ENCODE measurements at regions of chr7 and their contacts with region 1.

Region 1: DNA sequence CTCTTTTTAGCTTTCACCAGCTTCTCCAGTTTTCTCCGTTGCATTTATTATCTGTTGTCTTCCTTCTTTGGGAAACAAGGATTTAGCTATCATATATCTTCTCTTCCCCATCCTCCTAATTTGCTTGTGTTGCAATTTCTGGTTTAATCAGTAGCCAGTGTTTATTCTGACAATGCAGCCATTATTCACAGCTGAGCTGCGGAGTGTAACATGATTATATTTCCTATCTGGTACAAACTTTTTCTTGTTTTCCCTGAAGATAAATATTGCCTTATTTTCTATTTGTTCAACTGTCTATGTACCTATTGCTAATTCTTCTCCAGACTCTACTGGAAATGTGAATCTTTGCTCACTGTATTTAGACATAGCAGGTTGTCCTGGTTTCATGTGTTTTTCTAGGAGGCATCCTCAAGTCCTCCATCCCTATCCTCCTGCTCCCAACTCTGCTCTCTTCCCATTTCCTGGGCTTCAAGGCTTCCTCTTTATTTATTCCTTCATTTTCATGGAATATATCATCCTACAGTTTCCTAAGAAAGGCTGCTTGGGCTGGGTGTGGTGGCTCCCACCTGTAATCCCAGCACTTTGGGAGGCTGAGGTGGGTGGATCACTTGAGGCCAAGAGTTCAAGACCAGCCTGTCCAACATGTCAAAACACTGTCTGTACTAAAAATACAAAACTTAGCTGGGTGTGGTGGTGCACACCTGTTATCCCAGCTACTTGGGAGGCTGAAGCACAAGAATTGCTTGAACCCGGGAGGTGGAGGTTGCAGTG is 72.4 kb upstream of the KDM7A start:
- H3K4me3 Mint-ChIP-seq: no peak overlapping the region
- H3K27ac Mint-ChIP-seq: peak overlapping the region; percentile 95
- H3K4me1 Mint-ChIP-seq: peaks cover 64% of the 10 kb centered on the region
- H3K27me3 Mint-ChIP-seq: no peaks in the 10 kb centered on the region

Region 2: DNA sequence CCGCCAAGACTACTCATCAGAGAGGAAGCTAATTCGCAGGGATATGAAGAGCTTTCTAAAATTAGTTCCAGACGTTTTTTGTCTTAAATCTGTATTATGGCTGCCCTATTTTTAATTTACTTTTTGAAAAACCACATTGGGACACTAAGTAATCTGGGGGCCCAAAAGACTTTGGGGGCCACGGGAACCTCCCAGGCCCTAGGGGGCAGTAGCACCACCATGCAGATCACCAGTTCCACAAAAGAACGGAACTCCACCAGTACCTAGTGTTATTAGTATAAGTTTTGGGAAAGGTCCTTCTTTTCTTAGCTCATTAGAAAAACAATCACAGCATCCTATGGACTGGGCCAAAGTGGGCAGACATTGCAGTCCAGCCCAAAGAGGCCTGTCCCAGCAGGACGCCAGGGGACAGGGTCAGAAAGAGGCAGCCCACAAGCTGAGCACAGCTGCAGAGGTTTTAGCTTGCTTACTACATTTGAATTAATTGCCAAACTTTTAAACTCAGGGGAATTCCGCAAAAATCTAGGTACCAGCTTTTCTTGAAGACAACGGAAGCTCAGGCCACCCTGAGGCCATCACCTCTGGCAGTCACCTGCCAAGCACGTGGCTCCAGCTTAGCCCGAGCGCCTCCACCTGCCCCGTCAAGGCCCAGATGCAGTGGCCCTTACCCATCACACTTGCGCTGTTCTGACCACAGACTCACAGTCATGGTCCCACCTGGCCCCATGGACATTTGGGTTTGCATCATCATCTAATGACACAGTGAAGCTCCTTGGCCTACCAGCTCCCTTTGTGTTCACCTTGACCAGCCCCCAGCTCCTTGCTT is 261.3 kb before region 1 on chr7:
- intact Hi-C with region 1: no loop called
- H3K4me3 Mint-ChIP-seq: no peak overlapping the region
- H3K27ac Mint-ChIP-seq: no peak overlapping the region
- H3K4me1 Mint-ChIP-seq: peaks cover 41% of the 10 kb centered on the region
- H3K27me3 Mint-ChIP-seq: no peaks in the 10 kb centered on the region

Region 3: DNA sequence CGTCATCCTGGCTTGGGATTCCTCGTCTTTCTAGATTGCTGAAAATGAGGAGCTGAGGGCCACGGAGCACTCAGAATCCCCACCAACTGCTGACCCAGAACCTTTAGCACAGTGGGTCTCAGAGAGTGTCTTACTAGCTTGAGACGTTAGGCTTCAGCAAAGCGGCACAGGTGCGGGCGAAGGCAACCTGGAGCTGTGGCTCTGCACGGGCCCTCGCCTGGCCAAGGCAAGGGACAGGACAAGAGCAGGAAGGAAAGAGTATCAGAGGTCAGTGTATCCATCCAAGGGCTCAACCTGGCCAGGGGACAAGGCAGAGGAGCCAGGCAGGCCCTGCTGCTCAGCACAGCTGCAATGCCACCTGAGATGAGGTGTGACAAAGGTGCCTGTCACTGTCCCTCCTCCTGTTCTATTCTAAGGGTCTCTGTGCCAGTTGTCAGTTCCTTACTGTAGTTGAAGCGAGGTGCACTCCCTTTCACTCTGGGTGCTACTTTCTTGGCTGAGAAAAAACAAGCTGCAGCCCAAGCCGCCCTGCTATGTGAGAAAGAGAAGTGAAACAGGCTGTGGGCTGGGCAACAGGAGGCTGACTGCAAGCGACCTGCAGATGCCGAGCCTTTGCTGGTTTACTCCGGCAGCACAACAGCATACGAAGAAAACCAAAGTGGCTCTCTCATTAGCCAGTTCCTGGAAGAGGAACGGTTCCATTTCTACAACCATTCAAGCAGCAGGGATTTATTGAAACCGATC is 39.2 kb before region 1 on chr7:
- intact Hi-C with region 1: no loop called
- H3K4me3 Mint-ChIP-seq: peak overlapping the region; percentile 62
- H3K27ac Mint-ChIP-seq: peak overlapping the region; percentile 99
- H3K4me1 Mint-ChIP-seq: peaks cover 84% of the 10 kb centered on the region
- H3K27me3 Mint-ChIP-seq: peaks cover 5% of the 10 kb centered on the region

Region 4: DNA sequence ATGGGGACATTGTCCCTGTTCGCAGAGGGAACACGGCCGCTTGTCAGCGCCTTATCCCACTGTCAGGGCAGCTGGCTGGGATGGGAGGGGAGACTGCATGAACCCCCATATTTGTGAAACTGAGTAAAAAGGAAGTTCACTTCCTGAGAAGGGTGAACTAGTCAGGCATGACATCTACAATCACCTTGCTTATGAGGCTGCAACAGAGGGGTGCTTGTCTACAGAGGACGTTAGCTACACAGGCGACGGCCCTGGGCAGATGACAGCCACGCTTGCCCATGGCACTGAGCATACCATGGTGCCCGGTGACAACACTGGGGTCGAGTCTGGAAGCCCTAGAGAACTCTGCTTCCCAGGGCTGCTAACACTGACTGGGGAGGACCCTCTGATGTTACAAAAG is 26.4 kb before region 1 on chr7:
- intact Hi-C with region 1: no loop called
- H3K4me3 Mint-ChIP-seq: no peak overlapping the region
- H3K27ac Mint-ChIP-seq: peak overlapping the region; percentile 70
- H3K4me1 Mint-ChIP-seq: peaks cover 30% of the 10 kb centered on the region
- H3K27me3 Mint-ChIP-seq: peaks cover 14% of the 10 kb centered on the region

Region 5: DNA sequence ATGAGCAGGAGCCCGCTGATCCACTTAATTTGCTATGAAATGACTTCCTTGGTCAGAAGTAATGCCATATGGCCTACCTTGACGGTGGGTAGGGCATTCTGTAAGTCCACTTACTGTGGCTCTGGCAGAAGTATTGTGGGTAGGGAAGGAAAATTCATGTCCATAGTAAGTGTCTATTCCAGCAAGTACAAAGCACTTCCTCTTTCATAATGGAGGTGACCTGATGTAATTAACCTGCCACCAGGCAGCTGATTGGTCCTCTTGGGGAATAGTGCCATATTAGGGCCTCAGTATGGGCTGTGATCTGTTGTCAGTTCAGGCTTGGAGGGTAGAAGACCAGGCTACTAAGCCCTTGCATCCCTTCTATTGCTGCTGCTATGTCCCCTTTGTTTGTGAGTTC is 45.2 kb after region 1 on chr7:
- intact Hi-C with region 1: loop called (anchors 5 kb)
- H3K4me3 Mint-ChIP-seq: no peak overlapping the region
- H3K27ac Mint-ChIP-seq: no peak overlapping the region
- H3K4me1 Mint-ChIP-seq: peaks cover 39% of the 10 kb centered on the region
- H3K27me3 Mint-ChIP-seq: no peaks in the 10 kb centered on the region

Region 6: GRCh38 chr7:140316165-140316661 is 67.0 kb after region 1 on chr7:
- intact Hi-C with region 1: loop called (anchors 2 kb)
- H3K4me3 Mint-ChIP-seq: peak overlapping the region; percentile 94
- H3K27ac Mint-ChIP-seq: peak overlapping the region; percentile 98
- H3K4me1 Mint-ChIP-seq: peaks cover 71% of the 10 kb centered on the region
- H3K27me3 Mint-ChIP-seq: no peaks in the 10 kb centered on the region

Region 7: GRCh38 chr7:141001122-141001521 is 751.9 kb after region 1 on chr7:
- intact Hi-C with region 1: no loop called
- H3K4me3 Mint-ChIP-seq: no peak overlapping the region
- H3K27ac Mint-ChIP-seq: no peak overlapping the region
- H3K4me1 Mint-ChIP-seq: no peaks in the 10 kb centered on the region
- H3K27me3 Mint-ChIP-seq: no peaks in the 10 kb centered on the region

Measured in dendritic cell treated with granulocyte-macrophage colony-stimulating factor and Interleukin-4, amounts not matched to agents 40 ng/mL and 50 ng/mL, for 4 days (primary cell).